IMR-90 (cell line): ENCODE measurements at regions of chr3 and their contacts with region 1.

Region 1: GRCh38 chr3:133197619-133198018 is 159.4 kb downstream of the TMEM108 start:
- DNase-seq: no peak
- ATAC-seq: no peak
- H3K4me3 ChIP-seq: no peak overlapping the region
- H3K27ac ChIP-seq: no peak overlapping the region
- H3K4me1 ChIP-seq: no peaks in the 10 kb centered on the region
- H3K27me3 ChIP-seq: no peaks in the 10 kb centered on the region
- CTCF ChIP-seq: no peak
- POLR2A ChIP-seq: no peak
- RAD21 ChIP-seq: no peak

Region 2: DNA sequence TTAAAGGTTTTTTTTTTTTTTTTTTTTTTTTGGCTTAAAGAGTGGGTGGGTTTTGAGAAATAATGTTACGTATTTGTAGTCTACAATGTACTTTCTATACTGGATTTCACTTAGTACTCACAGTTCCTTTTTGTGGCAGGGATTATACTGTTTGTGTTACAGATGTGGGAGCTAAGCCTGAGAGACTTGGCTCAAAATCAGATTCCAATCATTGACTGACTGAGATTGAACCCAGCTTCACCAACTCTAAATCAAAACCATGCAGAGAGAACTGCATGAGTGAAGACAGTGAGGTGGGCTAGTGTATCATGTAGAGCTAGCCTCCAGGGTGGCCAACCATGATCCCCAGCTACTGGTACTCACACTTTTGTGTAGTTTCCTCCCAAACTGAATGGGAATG is 91.5 kb before region 1 on chr3:
- CTCF ChIA-PET with region 1: no interaction called
- POLR2A ChIA-PET with region 1: no interaction called
- dilution Hi-C with region 1: no loop called
- in situ Hi-C with region 1: no loop called
- intact Hi-C with region 1: no loop called
- DNase-seq: no peak
- ATAC-seq: no peak
- H3K4me3 ChIP-seq: no peak overlapping the region
- H3K27ac ChIP-seq: no peak overlapping the region
- H3K4me1 ChIP-seq: no peaks in the 10 kb centered on the region
- H3K27me3 ChIP-seq: no peaks in the 10 kb centered on the region
- CTCF ChIP-seq: no peak
- POLR2A ChIP-seq: no peak
- RAD21 ChIP-seq: no peak

Region 3: GRCh38 chr3:133230195-133230594 is 32.6 kb after region 1 on chr3:
- CTCF ChIA-PET with region 1: interaction called, 5 read pairs
- POLR2A ChIA-PET with region 1: no interaction called
- dilution Hi-C with region 1: no loop called
- in situ Hi-C with region 1: no loop called
- intact Hi-C with region 1: loop called (anchors 2 kb)
- DNase-seq: no peak
- ATAC-seq: no peak
- H3K4me3 ChIP-seq: no peak overlapping the region
- H3K27ac ChIP-seq: no peak overlapping the region
- H3K4me1 ChIP-seq: no peaks in the 10 kb centered on the region
- H3K27me3 ChIP-seq: no peaks in the 10 kb centered on the region
- CTCF ChIP-seq: no peak
- POLR2A ChIP-seq: no peak
- RAD21 ChIP-seq: no peak